Activated CD4-positive, alpha-beta T cell treated with anti-CD3 and anti-CD28 coated beads for 36 hours (primary cell): ENCODE measurements at regions of chr1 and their contacts with region 1.

Region 1: DNA sequence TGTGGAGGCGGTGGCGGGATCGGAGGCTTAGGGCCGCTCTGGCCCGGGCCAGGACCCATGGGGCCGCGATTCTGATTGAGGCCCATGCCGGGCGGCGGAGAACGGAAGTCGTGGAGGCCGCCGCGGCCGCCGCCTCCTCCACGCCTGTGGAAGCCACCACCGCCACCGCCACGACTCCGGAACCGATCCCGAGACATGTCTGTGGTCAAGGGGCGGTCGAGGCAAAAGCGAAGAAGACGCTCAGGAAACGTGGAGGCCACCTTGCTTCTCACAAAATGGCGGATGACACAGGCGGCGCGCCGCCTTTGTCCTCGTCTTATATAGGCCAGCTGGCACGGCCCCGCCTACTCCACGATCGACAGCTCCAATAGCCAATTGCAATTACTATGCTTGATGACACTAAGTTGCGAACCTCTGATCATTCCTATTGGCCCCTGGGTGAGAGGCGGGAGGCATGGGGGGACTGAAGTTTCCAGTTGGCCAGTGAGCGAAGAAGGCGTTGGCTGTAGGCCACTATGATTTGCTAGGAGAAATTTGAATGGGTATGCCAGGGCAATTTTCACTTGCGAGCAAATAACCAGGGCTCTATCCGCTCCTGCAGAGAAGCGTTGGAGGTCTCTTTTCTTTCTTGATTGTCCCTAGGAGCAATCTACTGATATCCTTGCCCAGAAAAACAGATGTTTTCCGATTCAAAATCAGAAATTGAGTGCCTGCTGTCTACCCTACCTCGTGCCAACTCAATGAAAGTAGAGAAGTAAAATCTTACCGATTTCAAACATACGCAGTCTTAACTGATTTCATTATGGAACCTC is at the start of gene SFPQ:
- DNase-seq: peak; percentile 96
- ATAC-seq: peak; percentile 96
- H3K4me3 Mint-ChIP-seq: peak within 1 kb of the TSS; percentile 90
- H3K27ac Mint-ChIP-seq: peak within 1 kb of the TSS; percentile 98
- H3K4me1 Mint-ChIP-seq: peaks cover 32% of the 10 kb centered on the region
- H3K27me3 Mint-ChIP-seq: no peaks in the 10 kb centered on the region
- total RNA-seq, gene SFPQ: 350 to 389 TPM

Region 2: GRCh38 chr1:34859446-34860200 is 333.4 kb before region 1 on chr1 and contains the start of gene SMIM12:
- CTCF ChIA-PET with region 1: no interaction called
- POLR2A ChIA-PET with region 1: interaction called, 5 read pairs
- intact Hi-C with region 1: loop called (anchors 1 to 5 kb)
- DNase-seq: peak; percentile 95
- ATAC-seq: peak; percentile 95
- H3K4me3 Mint-ChIP-seq: peak within 1 kb of the TSS; percentile 98
- H3K27ac Mint-ChIP-seq: peak within 1 kb of the TSS; percentile 99
- H3K4me1 Mint-ChIP-seq: peaks cover 51% of the 10 kb centered on the region
- H3K27me3 Mint-ChIP-seq: no peaks in the 10 kb centered on the region
- total RNA-seq, gene SMIM12: 42.4 to 45.0 TPM

Region 3: DNA sequence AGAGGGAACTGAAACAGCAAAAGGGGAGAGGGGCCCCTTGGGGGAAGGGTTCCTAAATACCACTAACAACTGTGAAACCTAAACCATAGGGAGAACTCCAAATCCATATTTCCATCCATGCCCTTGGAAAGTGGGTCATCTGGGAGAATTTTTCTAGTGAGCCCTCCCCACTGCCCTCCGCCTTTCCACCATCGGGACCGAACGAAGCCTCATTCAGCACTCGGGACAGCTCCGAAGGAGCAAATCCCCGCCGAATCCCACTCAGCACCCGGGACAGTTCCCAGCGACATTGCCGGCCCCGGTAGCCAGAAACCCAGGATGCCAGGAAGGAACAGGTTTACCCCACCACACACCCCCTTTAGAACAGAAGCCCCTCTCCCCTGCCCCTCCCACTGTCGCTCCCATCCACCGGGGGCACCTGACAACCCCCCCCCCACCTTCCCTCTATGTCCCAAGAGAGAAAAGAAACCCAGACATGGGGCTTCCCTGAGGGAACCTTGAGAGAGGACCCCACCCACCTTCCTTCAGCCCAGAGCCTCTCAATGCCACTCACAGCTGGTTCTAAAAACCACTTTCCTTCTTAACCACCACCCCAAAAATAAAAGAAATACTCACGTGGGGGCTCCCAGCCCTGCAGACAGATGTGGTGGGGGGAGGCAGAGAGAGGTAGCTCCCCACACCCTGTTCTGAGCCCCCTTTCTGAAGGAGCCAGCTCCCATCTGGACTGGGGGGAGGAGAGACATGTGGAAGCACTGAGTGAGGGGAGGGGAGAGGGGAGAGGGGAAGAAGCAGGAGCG is 268.1 kb before region 1 on chr1:
- CTCF ChIA-PET with region 1: no interaction called
- POLR2A ChIA-PET with region 1: no interaction called
- intact Hi-C with region 1: no loop called
- DNase-seq: peak; percentile 79
- ATAC-seq: no peak
- H3K4me3 Mint-ChIP-seq: no peak overlapping the region
- H3K27ac Mint-ChIP-seq: no peak overlapping the region
- H3K4me1 Mint-ChIP-seq: peaks cover 7% of the 10 kb centered on the region
- H3K27me3 Mint-ChIP-seq: peaks cover 61% of the 10 kb centered on the region

Region 4: DNA sequence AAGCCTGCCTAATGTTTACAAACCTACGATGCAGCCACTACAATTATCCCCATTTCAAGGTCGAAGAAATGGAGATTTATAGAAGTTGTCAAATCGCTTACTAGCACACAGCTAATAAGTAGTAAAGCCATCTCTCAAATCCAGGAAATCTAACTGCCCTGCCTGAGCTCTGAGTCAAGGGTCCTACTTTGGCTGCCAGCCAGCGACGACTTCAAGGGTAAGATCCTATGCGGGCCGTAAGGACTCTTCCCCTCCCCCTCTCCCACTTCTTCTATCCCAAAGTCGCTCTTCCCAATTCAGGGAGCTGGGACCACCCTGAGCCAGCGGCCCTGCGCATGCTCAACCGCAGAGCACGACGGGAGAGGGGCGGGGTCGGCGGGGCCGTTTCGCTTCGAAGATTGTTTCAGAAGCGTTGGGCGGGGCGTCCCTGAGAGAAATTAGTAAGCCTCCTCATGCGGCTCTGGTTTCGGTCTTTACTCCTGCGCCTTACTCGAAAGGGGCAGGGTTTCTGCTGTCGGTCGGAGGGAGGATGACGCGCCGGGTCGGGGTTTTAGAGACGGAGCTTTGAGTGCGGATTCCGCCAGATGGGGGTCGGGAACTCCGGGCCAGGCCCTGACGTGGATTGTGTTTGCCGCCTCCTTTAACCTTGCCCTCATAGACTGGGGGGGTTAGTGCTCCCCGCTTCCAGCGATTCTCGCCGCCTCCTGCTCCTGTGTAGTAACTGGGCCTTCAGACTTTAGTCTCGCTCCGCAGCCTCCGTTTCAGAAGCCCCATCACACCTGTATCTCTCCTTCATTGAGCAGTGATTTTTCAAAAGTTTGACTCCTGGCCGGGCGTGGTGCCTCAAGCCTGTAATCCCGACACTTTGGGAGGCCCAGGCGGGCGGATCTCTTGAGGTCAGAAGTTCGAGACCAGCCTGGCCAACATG is 113.8 kb before region 1 on chr1 and contains the start of gene ZMYM1:
- CTCF ChIA-PET with region 1: no interaction called
- POLR2A ChIA-PET with region 1: interaction called, 5 read pairs
- intact Hi-C with region 1: loop called (anchors 1 to 2 kb)
- DNase-seq: peak; percentile 95
- ATAC-seq: peak; percentile 97
- H3K4me3 Mint-ChIP-seq: peak within 1 kb of the TSS; percentile 88
- H3K27ac Mint-ChIP-seq: peak within 1 kb of the TSS; percentile 97
- H3K4me1 Mint-ChIP-seq: peaks cover 36% of the 10 kb centered on the region
- H3K27me3 Mint-ChIP-seq: peaks cover 5% of the 10 kb centered on the region
- total RNA-seq, gene ZMYM1: 3.3 to 5.7 TPM

Region 5: DNA sequence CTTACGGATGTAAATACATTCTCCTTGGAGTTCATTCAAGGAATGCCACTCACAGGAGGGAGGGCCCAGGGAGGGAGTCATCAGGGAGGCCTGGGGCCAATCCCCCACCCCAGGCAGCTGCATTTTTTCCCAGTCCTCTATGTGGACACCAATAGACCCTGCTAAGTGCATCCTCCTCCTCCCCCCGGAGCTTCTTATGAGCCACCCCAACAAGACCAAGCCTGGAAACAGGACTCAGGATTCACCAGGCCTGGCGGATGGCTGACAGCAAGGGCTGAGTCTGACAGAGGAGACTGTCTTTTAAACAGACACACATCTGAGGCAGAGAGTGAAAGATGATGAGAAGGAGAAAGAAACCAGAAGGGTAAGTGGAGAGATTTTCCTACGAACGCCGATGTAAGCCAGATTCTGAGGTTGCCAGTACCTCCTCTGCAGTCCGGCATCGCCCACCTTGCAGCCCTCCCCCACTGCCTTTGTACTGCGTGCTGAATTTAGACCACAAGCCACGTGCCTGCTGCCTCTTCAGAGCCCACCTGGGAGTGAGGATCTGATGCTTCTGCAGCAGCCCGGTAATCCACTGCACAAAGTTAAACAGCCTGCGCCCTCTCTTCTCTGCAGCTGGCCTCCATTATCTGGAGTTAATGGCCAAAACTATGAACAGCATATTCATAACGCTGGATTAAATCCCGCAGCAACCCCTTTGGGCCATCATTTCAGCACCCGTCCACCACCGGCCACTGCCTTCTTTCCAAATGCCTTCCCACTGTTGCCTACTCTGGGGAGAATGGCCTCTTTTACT is 17.5 kb after region 1 on chr1:
- CTCF ChIA-PET with region 1: no interaction called
- POLR2A ChIA-PET with region 1: no interaction called
- intact Hi-C with region 1: no loop called
- DNase-seq: no peak
- ATAC-seq: no peak
- H3K4me3 Mint-ChIP-seq: no peak overlapping the region
- H3K27ac Mint-ChIP-seq: no peak overlapping the region
- H3K4me1 Mint-ChIP-seq: peaks cover 3% of the 10 kb centered on the region
- H3K27me3 Mint-ChIP-seq: no peaks in the 10 kb centered on the region

Region 6: GRCh38 chr1:35298464-35298863 is 105.4 kb after region 1 on chr1:
- CTCF ChIA-PET with region 1: no interaction called
- POLR2A ChIA-PET with region 1: no interaction called
- intact Hi-C with region 1: no loop called
- DNase-seq: peak; percentile 25
- ATAC-seq: peak; percentile 81
- H3K4me3 Mint-ChIP-seq: no peak overlapping the region
- H3K27ac Mint-ChIP-seq: no peak overlapping the region
- H3K4me1 Mint-ChIP-seq: peaks cover 9% of the 10 kb centered on the region
- H3K27me3 Mint-ChIP-seq: no peaks in the 10 kb centered on the region

Region 7: DNA sequence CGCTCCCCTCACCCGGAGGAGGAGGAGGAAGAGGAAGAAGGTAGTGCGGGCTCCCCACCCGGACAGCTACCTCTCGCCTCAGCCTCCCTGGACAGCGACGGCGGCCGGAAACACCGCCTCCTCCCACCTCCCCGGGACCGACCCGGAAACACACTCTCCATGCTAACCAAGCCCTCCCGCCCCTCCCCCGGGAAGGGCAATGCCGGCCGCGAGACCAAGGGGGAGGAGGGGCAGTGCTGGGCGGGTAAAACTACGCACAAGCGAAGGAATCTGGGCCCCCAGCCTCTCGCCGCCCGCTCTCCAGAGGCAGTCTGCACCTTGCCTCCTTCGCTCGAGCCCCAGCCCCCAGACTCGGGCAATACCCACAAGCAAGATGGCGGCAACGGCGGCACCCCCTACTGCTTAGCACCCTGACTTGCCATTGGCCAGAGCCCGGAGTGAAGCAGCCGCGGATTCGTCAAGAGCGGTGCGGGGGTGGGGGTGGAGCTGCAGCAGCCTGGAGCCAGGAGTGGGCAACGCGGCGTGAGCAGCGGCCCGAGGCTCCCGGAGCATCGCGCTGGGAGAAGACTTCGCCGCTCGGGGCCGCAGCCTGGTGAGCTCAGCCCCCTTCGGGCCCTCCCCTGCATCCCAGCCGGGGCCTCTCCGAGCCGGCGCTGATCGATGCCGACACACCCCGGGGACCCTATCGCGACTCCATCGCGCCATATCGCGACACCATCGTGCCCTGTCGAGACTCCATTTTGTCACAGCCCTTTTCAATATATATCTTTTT is 364.4 kb after region 1 on chr1 and contains the starts of genes KIAA0319L and NCDN:
- CTCF ChIA-PET with region 1: no interaction called
- POLR2A ChIA-PET with region 1: interaction called, 4 read pairs
- intact Hi-C with region 1: loop called (anchors 1 to 5 kb)
- DNase-seq: peak; percentile 99
- ATAC-seq: peak; percentile 92
- H3K4me3 Mint-ChIP-seq: peak within 1 kb of the TSS; percentile 98
- H3K27ac Mint-ChIP-seq: peak within 1 kb of the TSS; percentile 97
- H3K4me1 Mint-ChIP-seq: peaks cover 45% of the 10 kb centered on the region
- H3K27me3 Mint-ChIP-seq: no peaks in the 10 kb centered on the region
- total RNA-seq, gene KIAA0319L: 26.5 to 28.1 TPM
- total RNA-seq, gene NCDN: 21.1 to 23.4 TPM

Region 8: DNA sequence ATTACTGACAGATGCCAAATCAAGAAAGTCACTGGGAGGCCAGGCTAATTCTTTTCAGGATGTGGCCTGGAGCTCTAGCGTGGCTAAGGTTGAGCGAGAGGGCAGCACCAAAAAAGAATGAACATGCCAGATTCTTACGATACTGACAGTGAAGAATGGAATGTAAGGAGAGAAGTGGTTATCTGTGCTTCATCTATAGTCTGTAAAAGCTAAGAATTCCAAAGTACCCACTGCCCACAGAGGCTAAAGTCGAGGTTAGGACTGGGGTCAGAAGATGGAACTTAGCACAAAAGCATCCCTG is 412.8 kb after region 1 on chr1:
- CTCF ChIA-PET with region 1: no interaction called
- POLR2A ChIA-PET with region 1: no interaction called
- intact Hi-C with region 1: no loop called
- DNase-seq: no peak
- ATAC-seq: no peak
- H3K4me3 Mint-ChIP-seq: no peak overlapping the region
- H3K27ac Mint-ChIP-seq: no peak overlapping the region
- H3K4me1 Mint-ChIP-seq: peaks cover 8% of the 10 kb centered on the region
- H3K27me3 Mint-ChIP-seq: no peaks in the 10 kb centered on the region

Region 9: DNA sequence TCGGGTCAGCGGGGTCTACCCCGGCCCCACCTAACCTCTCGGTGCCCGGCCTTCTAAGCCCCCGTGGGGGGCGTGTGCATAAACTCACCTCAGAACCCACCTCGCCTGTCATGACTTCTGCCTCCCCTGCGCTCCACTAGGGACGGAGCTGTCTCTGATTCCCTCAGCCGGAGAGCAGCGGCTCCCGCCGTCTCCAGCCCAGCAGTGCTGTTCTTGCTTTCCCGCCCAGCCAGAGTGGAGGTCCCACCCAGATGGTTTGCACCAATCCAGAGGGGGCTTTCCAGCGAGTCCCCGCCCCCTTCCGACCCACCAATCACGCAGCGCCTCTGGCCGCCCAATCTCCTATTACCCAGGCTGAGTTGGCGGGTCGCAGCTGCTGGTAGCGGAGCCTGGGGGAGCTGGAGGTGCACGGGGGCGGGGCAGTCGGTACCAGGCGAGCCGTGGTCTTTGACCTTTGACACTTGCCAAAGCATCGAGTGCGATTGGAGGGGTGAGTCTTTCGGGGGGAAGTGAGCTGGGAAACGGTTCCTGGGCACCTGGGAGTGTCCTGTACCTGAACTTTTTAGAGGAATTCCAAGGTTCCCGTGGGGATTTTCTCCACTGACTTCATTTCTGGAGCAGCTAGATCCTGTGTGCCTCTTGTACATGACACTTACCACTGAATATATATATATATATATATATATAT is 576.8 kb after region 1 on chr1 and contains the start of gene CLSPN:
- CTCF ChIA-PET with region 1: interaction called, 4 read pairs
- POLR2A ChIA-PET with region 1: interaction called, 5 read pairs
- intact Hi-C with region 1: loop called in 1 of 2 experiments (anchors 1 kb)
- DNase-seq: peak; percentile 98
- ATAC-seq: peak; percentile 98
- H3K4me3 Mint-ChIP-seq: peak within 1 kb of the TSS; percentile 91
- H3K27ac Mint-ChIP-seq: peak within 1 kb of the TSS; percentile 97
- H3K4me1 Mint-ChIP-seq: peaks cover 6% of the 10 kb centered on the region
- H3K27me3 Mint-ChIP-seq: no peaks in the 10 kb centered on the region
- total RNA-seq, gene CLSPN: 45.7 to 57.8 TPM

Region 10: DNA sequence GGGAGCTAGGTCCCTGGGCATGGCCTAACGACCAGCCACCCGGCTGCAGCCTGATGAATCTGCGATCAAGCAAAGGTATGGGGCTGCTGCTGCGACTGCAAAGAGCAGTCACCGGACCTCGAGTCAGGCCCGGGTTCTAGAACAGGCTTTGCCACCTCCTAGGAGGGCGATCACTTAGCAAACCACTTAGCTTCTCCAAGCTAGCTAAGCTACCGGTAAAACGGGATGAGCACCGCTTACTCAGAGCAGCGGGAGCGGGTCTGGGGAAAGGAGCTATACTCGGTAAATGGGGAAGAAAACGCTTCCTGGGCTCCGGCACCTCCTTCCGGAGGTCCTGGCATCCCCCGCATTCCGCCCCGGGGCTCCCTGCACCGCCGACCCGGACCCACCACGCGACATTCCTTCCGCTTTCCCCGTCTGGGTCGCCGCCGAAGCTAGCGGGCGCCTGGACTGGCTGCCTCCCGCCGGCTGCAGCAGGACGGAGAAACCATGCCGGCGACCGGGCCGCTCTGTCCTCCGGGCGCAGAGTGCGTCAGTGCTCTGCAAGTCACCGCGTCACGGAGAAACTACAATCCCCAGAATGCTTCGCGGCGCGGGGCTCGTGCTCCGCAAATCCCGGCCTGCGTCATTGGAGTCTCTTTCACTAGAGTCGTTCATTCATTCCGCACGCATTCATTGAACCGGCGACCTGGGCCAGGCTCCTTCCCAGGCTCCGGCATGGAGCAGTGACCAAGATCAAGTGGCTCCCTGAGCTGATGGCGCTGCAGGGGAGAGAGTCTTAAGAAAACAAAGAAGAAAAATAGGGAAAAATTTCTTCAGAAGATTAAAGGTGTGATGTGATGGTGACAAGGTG is 1204.5 kb after region 1 on chr1 and contains the start of gene LSM10:
- CTCF ChIA-PET with region 1: no interaction called
- POLR2A ChIA-PET with region 1: no interaction called
- intact Hi-C with region 1: loop called in 1 of 2 experiments (anchors 10 kb)
- DNase-seq: peak; percentile 96
- ATAC-seq: peak; percentile 89
- H3K4me3 Mint-ChIP-seq: peak within 1 kb of the TSS; percentile 90
- H3K27ac Mint-ChIP-seq: peak within 1 kb of the TSS; percentile 99
- H3K4me1 Mint-ChIP-seq: peaks cover 25% of the 10 kb centered on the region
- H3K27me3 Mint-ChIP-seq: no peaks in the 10 kb centered on the region
- total RNA-seq, gene LSM10: 40.6 to 44.0 TPM